RWPE1 (cell line): ENCODE measurements at regions of chr6 and their contacts with region 1.

Region 1: DNA sequence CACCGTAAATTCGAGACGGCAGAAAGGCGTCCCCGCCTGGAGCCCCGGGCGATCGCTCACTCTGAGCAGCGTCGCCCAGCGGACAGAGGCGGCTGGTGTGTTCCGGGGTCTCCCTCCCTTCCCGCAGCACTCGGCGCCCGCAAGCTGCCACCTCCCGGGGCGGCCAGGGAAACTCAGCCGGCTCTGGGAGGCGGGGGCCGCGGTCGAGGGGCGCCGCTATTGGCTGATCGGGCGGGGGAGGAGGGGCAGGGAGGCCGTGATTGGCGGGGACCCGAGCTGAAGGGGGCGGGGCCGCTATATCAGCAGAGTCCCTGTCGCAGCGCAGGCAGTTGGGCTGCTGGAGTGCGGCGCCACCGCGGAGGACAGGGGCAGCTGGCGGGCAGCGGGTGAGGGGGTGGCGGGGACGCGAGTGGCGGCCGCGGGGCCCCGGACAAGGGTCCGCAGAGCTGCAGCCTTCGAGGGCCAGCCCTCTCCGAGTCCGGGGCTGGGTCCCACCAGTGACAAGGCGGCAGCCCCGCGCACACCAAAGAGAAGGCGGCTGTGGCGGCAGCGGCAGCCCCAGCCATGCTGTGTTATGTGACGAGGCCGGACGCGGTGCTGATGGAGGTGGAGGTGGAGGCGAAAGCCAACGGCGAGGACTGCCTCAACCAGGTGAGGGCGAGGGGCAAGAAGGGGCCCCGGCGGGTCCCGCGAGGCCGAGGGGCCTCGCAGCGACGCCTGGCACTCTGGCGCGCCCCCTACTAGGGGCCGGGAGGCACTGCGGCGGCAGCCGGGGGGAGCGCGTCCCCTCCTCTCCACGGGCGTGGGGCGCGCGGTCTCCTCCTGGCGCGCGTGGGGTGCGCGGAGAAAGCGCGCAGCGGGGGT is at the start of gene MYLIP:
- DNase-seq: peak; percentile 95
- H3K27ac ChIP-seq: peak within 1 kb of the TSS; percentile 43
- CTCF ChIP-seq: peak; percentile 73

Region 2: DNA sequence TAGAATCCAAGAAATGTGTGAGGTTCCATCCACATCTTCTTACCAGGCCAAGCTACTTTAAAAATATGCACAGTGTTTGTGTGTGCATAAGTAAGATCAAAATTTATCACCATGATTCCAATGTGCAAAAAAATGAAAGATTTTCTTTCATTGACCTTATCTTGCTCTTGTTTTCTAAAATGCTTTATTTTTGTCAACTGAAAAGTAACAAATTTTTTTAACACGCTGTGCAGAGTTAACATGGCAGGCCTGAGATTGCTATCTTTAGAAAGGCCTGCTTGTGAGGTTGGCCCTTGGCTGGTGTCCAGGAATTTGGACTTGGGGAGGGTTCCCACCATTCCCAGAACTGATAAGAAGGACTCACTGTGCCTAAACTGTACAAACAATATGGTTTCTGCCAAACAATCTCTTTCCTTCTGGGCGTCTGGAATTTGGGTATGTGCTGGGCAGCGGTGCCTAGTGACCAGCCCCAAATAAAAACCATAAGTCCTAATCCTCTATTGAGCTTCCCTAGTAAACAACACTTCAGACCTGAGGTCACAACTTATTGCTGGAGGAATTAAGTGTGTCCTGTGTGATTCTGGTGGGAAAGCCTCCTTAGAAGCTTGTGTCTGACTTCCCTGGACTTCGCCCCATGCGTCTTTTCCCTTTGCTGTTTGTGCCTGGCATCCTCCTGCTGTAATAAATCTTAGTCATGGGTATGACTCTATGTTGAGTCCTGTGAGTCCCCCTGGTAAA is 19.9 kb before region 1 on chr6:
- CTCF ChIA-PET with region 1: interaction called, 10 read pairs
- POLR2A ChIA-PET with region 1: no interaction called
- DNase-seq: no peak
- H3K27ac ChIP-seq: no peak overlapping the region
- CTCF ChIP-seq: no peak